Activated T-helper 2 cell treated with anti-CD3 and anti-CD28 coated beads, Interferon-gamma antibody, Interleukin-2, Interleukin-4, amounts not matched to agents 10 μg/mL and 5 μg/mL and 100 μg/mL, durations not matched to agents 14 hours and 24 hours and 36 hours (primary cell): ENCODE measurements at regions of chr11 and their contacts with region 1.

Region 1: DNA sequence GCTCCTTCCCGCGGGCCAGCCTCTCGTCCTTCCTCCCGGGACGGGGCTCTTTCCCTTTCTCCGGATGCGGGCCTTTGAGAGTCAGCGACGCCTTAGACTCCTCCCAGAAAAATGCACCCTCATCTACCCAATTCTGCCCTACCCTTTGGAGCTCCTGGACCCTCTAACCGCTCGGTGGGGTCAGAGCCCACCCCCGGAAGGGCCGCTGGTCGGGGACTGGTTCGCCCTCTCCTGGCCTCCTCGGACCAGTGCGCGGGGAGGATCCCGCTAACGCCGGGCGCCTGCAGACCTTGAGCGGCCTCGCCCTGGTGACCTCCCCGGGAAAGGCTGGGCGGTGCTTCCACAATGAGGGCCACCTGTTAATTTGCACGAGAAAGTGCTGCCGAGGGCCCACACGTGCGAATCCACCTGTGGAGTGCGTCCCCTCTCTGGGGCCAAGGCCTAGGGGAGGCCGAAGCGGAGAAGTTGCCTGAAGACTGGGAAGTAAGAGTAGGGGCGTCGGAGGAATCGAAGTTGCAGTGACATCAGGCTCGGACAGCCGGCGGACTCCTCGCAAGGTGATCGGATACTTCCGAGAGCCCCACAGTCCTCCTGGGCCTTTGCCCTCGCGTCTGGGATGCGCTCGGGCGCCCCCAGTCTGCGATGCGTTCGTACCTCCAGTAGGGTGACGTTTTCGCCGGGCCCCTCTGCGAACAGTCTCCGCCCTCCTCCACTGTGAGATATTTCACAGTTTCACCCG is 61.5 kb downstream of the ENDOD1 start:
- DNase-seq: peak; percentile 89
- H3K4me3 Mint-ChIP-seq: peak overlapping the region; percentile 87
- H3K27ac Mint-ChIP-seq: peak overlapping the region; percentile 92
- H3K4me1 Mint-ChIP-seq: peaks cover 51% of the 10 kb centered on the region
- H3K27me3 Mint-ChIP-seq: no peaks in the 10 kb centered on the region

Region 2: DNA sequence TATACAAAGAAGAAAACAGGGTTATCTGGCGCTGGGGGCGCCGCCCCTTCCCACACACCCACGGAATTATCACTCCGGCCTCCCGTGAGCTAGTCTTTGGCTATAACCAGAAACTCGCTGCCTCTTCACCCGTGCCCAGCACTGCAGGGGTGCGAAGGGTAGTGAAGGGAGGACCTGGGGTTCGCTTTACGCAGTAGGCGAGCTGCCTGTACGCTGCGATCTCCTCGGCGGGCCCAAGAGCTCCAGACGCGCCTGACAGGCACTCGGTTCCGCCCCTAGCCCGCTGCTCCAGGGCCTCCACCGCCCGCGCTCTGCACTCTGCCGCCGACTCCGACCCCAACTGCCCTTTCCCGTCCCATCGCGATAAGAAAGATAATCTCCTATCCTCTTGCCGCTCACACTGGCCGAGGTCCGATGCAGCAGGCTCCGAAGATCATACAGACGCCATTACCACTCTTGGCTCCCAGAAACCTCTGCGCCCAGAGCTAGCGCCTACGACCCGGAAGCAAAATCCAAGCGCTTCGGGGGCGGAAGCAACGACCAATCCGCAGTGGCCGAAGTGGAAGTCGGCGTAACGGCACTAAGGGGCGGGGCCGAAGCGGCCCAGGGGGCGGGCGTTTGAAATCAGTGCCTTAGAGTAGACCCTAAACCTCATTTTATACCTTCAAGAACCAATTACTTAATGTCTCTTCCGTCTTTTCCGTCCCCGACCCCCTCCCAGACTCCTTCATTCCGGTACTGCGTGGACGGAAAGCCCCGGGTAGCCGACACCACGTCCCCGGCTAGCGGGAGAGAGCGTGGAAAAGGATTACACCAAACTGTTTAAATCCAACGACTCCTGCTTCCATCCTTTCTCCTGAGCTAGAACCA is 177.8 kb before region 1 on chr11 and contains the starts of genes CWC15 and KDM4D:
- intact Hi-C with region 1: loop called (anchors 1 kb)
- DNase-seq: peak; percentile 91
- H3K4me3 Mint-ChIP-seq: peak within 1 kb of the TSS; percentile 95
- H3K27ac Mint-ChIP-seq: peak within 1 kb of the TSS; percentile 91
- H3K4me1 Mint-ChIP-seq: peaks cover 28% of the 10 kb centered on the region
- H3K27me3 Mint-ChIP-seq: no peaks in the 10 kb centered on the region
- total RNA-seq, gene CWC15: 86.1 and 94.4 TPM in 2 replicates
- total RNA-seq, gene KDM4D: 0.48 and 0.84 TPM in 2 replicates

Region 3: GRCh38 chr11:95231127-95231880 is 80.2 kb after region 1 on chr11 and contains the start of gene SESN3:
- intact Hi-C with region 1: loop called (anchors 1 kb)
- DNase-seq: peak; percentile 99
- H3K4me3 Mint-ChIP-seq: peak within 1 kb of the TSS; percentile 92
- H3K27ac Mint-ChIP-seq: peak within 1 kb of the TSS; percentile 77
- H3K4me1 Mint-ChIP-seq: peaks cover 38% of the 10 kb centered on the region
- H3K27me3 Mint-ChIP-seq: peaks cover 4% of the 10 kb centered on the region
- total RNA-seq, gene SESN3: 73.2 and 74.9 TPM in 2 replicates

Region 4: DNA sequence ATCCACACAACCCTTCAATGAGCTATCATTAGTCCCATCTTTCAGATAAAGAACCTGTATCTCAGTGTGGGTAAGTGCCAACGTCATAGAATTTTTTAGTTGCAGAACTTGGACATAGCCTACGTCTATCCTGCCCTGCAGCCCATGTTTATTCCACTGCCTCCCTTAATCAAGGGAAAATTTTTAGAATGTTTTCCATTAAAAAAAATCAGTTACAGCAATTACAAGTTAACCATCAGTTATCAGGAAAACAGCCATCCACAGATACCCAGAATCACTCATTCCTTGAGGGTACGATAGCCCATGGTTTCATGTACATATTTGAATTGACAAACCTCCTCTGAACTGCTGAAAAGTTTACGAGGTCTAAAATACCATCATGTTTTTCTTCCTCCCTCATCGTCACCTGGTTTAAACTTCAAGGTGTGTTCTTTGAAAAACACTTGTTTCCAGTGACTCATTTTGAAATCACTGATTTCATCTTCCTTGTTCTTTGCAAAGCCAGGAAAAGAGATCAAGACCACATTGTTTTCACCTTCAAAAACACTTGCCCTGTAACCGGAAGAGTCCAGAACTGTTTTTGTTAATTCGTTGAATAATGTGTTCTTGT is 537.6 kb after region 1 on chr11:
- intact Hi-C with region 1: loop called (anchors 1 kb)
- DNase-seq: no peak
- H3K4me3 Mint-ChIP-seq: peak overlapping the region; percentile 15
- H3K27ac Mint-ChIP-seq: no peak overlapping the region
- H3K4me1 Mint-ChIP-seq: peaks cover 21% of the 10 kb centered on the region
- H3K27me3 Mint-ChIP-seq: no peaks in the 10 kb centered on the region

Region 5: DNA sequence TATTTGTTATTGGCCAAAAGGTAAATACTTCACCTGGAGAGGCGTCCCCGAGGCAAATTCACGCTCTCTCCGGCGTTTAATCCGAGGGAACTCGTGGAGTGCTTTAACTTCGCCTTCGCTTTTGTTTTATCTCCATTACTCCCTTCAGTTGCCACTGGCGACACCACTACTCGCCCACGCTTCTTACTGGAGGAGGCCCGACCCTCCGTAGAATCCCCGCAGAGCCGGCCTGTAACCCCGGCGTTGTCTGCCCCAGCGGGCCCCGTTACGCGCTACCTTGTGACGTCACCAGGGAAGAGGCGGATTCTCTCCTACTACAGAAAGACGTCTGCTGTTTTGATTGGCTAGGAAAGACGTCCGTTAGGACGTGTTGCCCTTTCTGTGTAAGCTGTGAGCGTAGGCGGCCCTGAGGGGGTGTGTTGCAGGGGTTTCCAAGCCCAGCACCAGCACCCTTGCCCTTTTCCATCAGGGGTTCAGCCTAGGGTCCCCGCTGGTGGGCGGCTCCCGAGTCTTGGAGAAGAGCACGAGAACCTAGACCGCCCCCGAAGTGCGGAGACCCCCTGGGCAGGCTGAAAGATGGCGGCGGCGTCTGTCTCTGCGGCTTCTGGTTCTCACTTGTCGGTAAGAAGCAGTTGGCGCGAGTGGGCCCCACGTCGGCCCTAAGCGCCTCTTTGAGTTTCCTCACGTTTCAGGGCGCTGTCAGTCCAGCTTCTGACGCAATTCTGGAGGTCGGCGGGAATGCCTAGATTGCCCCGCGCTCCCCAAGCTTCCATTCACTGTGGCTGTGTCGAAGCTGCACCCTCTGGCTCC is 639.2 kb after region 1 on chr11 and contains the start of gene CEP57:
- intact Hi-C with region 1: loop called (anchors 1 kb)
- DNase-seq: peak; percentile 92
- H3K4me3 Mint-ChIP-seq: peak within 1 kb of the TSS; percentile 98
- H3K27ac Mint-ChIP-seq: peak within 1 kb of the TSS; percentile 100
- H3K4me1 Mint-ChIP-seq: peaks cover 52% of the 10 kb centered on the region
- H3K27me3 Mint-ChIP-seq: no peaks in the 10 kb centered on the region
- total RNA-seq, gene CEP57: 88.3 and 94.5 TPM in 2 replicates